Naive thymus-derived CD4-positive, alpha-beta T cell (primary cell): ENCODE measurements at regions of chr16 and their contacts with region 1.

Region 1: GRCh38 chr16:74601126-74601871 is 5.6 kb downstream of the GLG1 start:
- DNase-seq: peak in 8 of 9 donors; percentile 47 to 85 (median 81)
- ATAC-seq: peak; percentile 99
- H3K4me3 ChIP-seq: peak overlapping the region; percentile 45
- H3K4me3 Mint-ChIP-seq: peak overlapping the region; percentile 79 to 97 (median 86)
- H3K27ac ChIP-seq: peak overlapping the region; percentile 65
- H3K27ac Mint-ChIP-seq: peak overlapping the region; percentile 87 to 99 (median 96)
- H3K4me1 ChIP-seq: peaks cover 41 to 49% of the 10 kb centered on the region in 2 donors
- H3K4me1 Mint-ChIP-seq: peaks cover 59 to 85% (median 73%) of the 10 kb centered on the region in 7 donors
- H3K27me3 ChIP-seq: no peaks in the 10 kb centered on the region
- H3K27me3 Mint-ChIP-seq: no peaks in the 10 kb centered on the region

Region 2: GRCh38 chr16:74064120-74064735 is 537.1 kb before region 1 on chr16:
- CTCF ChIA-PET with region 1: no interaction called
- POLR2A ChIA-PET with region 1: no interaction called
- intact Hi-C with region 1: no loop called
- DNase-seq: no peak
- ATAC-seq: no peak
- H3K4me3 ChIP-seq: no peak overlapping the region
- H3K4me3 Mint-ChIP-seq: no peak overlapping the region
- H3K27ac ChIP-seq: no peak overlapping the region
- H3K27ac Mint-ChIP-seq: no peak overlapping the region
- H3K4me1 ChIP-seq: no peaks in the 10 kb centered on the region
- H3K4me1 Mint-ChIP-seq: peaks cover 0 to under 1% (median 0%) of the 10 kb centered on the region in 7 donors
- H3K27me3 ChIP-seq: no peaks in the 10 kb centered on the region
- H3K27me3 Mint-ChIP-seq: peaks cover 0 to 27% (median 11%) of the 10 kb centered on the region in 5 donors

Region 3: GRCh38 chr16:74568961-74569631 is 32.2 kb before region 1 on chr16:
- CTCF ChIA-PET with region 1: no interaction called
- POLR2A ChIA-PET with region 1: interaction called, 9 read pairs
- intact Hi-C with region 1: loop called in 1 of 2 experiments (anchors 5 kb)
- DNase-seq: no peak
- ATAC-seq: no peak
- H3K4me3 ChIP-seq: no peak overlapping the region
- H3K4me3 Mint-ChIP-seq: peak overlapping the region in 7 of 10 donors; percentile 7 to 53 (median 42)
- H3K27ac ChIP-seq: no peak overlapping the region
- H3K27ac Mint-ChIP-seq: peak overlapping the region in 6 of 9 donors; percentile 38 to 80 (median 51)
- H3K4me1 ChIP-seq: peaks cover 9 to 37% of the 10 kb centered on the region in 2 donors
- H3K4me1 Mint-ChIP-seq: peaks cover 51 to 97% (median 85%) of the 10 kb centered on the region in 7 donors
- H3K27me3 ChIP-seq: no peaks in the 10 kb centered on the region
- H3K27me3 Mint-ChIP-seq: no peaks in the 10 kb centered on the region

Region 4: GRCh38 chr16:74582970-74583369 is 18.3 kb before region 1 on chr16:
- CTCF ChIA-PET with region 1: interaction called, 4 read pairs
- POLR2A ChIA-PET with region 1: interaction called, 13 read pairs
- intact Hi-C with region 1: loop called (anchors 1 to 2 kb)
- DNase-seq: no peak
- ATAC-seq: no peak
- H3K4me3 ChIP-seq: no peak overlapping the region
- H3K4me3 Mint-ChIP-seq: peak overlapping the region in 5 of 10 donors; percentile 12 to 67 (median 57)
- H3K27ac ChIP-seq: no peak overlapping the region
- H3K27ac Mint-ChIP-seq: peak overlapping the region in 8 of 9 donors; percentile 1 to 92 (median 60)
- H3K4me1 ChIP-seq: peaks cover 13 to 21% of the 10 kb centered on the region in 2 donors
- H3K4me1 Mint-ChIP-seq: peaks cover 56 to 99% (median 71%) of the 10 kb centered on the region in 7 donors
- H3K27me3 ChIP-seq: no peaks in the 10 kb centered on the region
- H3K27me3 Mint-ChIP-seq: no peaks in the 10 kb centered on the region

Region 5: DNA sequence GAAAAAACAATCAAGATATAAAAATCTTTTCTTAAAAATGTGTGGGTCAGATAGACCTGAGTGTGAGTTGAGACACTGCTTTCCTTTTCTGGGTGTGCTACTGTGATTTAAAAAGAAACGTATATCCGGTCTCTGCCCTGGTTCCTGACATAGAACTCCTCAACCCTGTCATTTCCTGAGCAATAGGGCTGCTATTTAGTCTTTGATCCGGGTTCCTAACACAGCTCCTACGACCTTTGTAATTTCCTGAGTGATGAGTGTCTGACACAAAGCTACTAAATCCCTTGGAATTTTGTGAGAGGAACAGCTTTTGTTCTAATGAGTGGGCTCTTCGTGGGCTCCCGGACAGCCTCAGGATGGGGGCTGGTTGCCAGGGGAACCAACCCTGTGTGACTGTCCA is 267.2 kb after region 1 on chr16:
- CTCF ChIA-PET with region 1: no interaction called
- POLR2A ChIA-PET with region 1: no interaction called
- intact Hi-C with region 1: no loop called
- DNase-seq: peak in 6 of 9 donors; percentile 28 to 63 (median 42)
- ATAC-seq: peak; percentile 89
- H3K4me3 ChIP-seq: no peak overlapping the region
- H3K4me3 Mint-ChIP-seq: peak overlapping the region; percentile 8 to 78 (median 56)
- H3K27ac ChIP-seq: peak overlapping the region; percentile 69
- H3K27ac Mint-ChIP-seq: peak overlapping the region; percentile 85 to 96 (median 95)
- H3K4me1 ChIP-seq: peaks cover 3 to 22% of the 10 kb centered on the region in 2 donors
- H3K4me1 Mint-ChIP-seq: peaks cover 16 to 33% (median 29%) of the 10 kb centered on the region in 7 donors
- H3K27me3 ChIP-seq: no peaks in the 10 kb centered on the region
- H3K27me3 Mint-ChIP-seq: no peaks in the 10 kb centered on the region